CD4-positive, alpha-beta T cell (primary cell): ENCODE measurements at regions of chr3 and their contacts with region 1.

Region 1: DNA sequence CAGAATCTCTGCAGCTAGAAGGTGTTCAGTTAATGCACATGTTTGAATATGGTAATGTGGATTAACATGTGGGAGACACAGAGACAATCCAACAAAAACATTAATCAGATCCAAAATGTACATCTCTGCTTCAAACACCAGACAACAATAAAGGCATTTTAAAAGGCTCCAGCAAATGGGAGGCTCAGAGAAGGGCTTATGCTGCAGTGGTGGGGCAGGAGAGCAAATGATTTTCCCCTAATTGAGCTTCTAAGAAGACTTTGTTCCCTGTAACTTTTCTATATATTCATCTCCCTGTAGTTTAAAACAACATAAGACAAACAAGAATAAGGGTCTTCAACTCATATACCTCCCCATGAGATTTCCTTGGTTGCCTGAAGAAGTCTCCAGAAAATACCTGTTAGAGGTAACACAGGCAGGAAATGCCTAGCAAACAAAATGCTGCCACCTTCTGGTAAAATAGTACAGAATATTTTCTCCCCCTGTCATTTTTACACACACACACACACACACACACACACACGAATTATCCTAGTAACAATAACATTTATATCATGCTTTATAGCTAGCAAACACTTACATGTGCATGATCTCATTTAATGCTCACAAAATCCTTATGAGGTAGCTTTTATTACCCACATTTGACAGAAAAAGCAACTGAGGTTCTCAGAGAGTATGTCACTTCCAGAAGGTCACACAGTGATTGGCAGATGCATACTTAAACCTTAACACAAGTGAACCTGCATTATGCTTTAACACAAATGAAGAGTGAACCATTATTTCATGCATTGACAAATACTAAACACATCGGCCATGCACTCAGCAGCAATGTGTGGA is 123.4 kb upstream of the MB21D2 start:
- DNase-seq: peak in 5 of 14 experiments; percentile 0 to 59 (median 48)
- ATAC-seq: no peak
- H3K4me3 ChIP-seq: no peak overlapping the region
- H3K4me3 Mint-ChIP-seq: no peak overlapping the region
- H3K27ac ChIP-seq: no peak overlapping the region
- H3K27ac Mint-ChIP-seq: no peak overlapping the region
- H3K4me1 ChIP-seq: no peaks in the 10 kb centered on the region
- H3K4me1 Mint-ChIP-seq: no peaks in the 10 kb centered on the region
- H3K27me3 ChIP-seq: no peaks in the 10 kb centered on the region
- H3K27me3 Mint-ChIP-seq: no peaks in the 10 kb centered on the region
- CTCF ChIP-seq: peak; percentile 35

Region 2: DNA sequence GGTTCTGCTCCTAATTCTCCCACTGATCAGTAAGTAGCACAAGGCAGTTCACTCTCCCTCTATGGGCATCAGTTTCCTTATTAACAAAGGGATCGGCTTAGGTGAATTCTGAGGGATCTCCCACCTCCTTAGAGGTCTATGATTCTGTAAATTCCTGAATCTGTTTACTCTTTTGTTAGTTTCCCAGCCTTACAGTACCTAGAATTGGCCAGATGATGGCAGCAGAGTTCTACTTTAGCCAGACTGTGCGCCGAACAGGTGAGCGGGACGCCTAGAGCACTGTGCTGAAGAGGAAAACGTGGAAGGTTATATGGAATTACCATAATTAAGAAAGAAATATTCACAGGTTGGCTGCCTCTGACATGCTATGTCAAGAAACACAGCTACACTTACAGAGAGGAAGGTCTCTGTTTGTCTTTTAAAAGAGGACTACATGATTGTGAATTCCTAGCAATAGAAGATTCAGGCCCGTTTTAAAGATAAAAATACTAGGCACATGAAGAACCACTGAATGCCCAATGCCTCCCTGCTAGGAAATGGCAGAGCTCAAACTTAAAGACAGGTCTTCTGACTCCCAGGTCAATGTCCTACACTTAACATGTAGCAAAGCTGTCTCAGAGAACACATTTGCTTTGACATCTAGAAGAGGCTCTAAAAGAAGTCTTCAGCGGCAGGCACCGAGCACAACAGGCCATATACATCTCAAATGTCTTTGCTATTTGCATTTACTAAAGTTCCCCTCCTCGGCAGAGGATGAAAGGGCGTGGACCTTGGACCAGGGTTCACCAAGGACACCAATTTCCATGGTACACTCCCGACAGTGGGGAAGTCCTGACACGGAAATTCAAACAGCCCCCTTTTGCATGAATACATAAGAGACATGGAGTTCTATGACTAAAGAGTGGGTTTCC is 573.6 kb before region 1 on chr3:
- CTCF ChIA-PET with region 1: no interaction called
- POLR2A ChIA-PET with region 1: no interaction called
- intact Hi-C with region 1: loop called (anchors 5 kb)
- DNase-seq: peak; percentile 11 to 64 (median 25)
- ATAC-seq: peak; percentile 79
- H3K4me3 ChIP-seq: no peak overlapping the region
- H3K4me3 Mint-ChIP-seq: no peak overlapping the region
- H3K27ac ChIP-seq: no peak overlapping the region
- H3K27ac Mint-ChIP-seq: no peak overlapping the region
- H3K4me1 ChIP-seq: no peaks in the 10 kb centered on the region
- H3K4me1 Mint-ChIP-seq: no peaks in the 10 kb centered on the region
- H3K27me3 ChIP-seq: peaks cover 0 to 4% of the 10 kb centered on the region in 2 experiments
- H3K27me3 Mint-ChIP-seq: peaks cover 42% of the 10 kb centered on the region
- CTCF ChIP-seq: peak; percentile 77

Region 3: GRCh38 chr3:192566706-192567290 is 474.3 kb before region 1 on chr3:
- CTCF ChIA-PET with region 1: no interaction called
- POLR2A ChIA-PET with region 1: no interaction called
- intact Hi-C with region 1: loop called in 1 of 2 experiments (anchors 5 kb)
- DNase-seq: peak; percentile 17 to 68 (median 41)
- ATAC-seq: no peak
- H3K4me3 ChIP-seq: no peak overlapping the region
- H3K4me3 Mint-ChIP-seq: no peak overlapping the region
- H3K27ac ChIP-seq: no peak overlapping the region
- H3K27ac Mint-ChIP-seq: no peak overlapping the region
- H3K4me1 ChIP-seq: peaks cover 2% of the 10 kb centered on the region
- H3K4me1 Mint-ChIP-seq: no peaks in the 10 kb centered on the region
- H3K27me3 ChIP-seq: peaks cover 0 to 12% of the 10 kb centered on the region in 2 experiments
- H3K27me3 Mint-ChIP-seq: peaks cover 30% of the 10 kb centered on the region
- CTCF ChIP-seq: peak; percentile 46

Region 4: DNA sequence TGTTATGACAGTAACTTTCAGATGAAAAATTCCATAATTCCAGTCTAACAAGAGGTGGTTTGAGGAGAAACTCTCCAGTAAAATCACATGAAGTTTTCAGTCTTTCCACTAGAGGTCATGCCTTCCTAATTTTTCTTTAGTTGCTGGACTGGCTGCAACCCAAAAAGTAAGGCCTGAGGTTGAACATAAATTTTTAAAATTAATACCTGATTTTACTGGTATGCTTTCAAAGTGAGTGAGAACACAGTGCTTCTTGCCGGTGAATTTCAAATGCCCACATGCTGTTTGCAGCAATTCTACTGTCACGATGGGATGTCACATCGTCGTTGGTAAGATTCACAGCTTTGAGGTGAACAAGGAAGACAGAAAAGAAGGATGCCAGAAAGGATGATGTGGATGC is 224.7 kb before region 1 on chr3:
- CTCF ChIA-PET with region 1: interaction called, 14 read pairs
- POLR2A ChIA-PET with region 1: no interaction called
- intact Hi-C with region 1: loop called in 1 of 2 experiments (anchors 1 kb)
- DNase-seq: peak in 3 of 14 experiments; percentile 46 to 57 (median 55)
- ATAC-seq: no peak
- H3K4me3 ChIP-seq: no peak overlapping the region
- H3K4me3 Mint-ChIP-seq: no peak overlapping the region
- H3K27ac ChIP-seq: no peak overlapping the region
- H3K27ac Mint-ChIP-seq: no peak overlapping the region
- H3K4me1 ChIP-seq: peaks cover 12% of the 10 kb centered on the region
- H3K4me1 Mint-ChIP-seq: no peaks in the 10 kb centered on the region
- H3K27me3 ChIP-seq: no peaks in the 10 kb centered on the region
- H3K27me3 Mint-ChIP-seq: peaks cover 14% of the 10 kb centered on the region
- CTCF ChIP-seq: peak; percentile 40